Endothelial cell of umbilical vein (primary cell): ENCODE measurements at regions of chr10 and their contacts with region 1.

Region 1: GRCh38 chr10:127081851-127082345 is 114.5 kb downstream of the INSYN2A start:
- DNase-seq: peak; percentile 65
- H3K4me3 ChIP-seq: no peak overlapping the region
- H3K27ac ChIP-seq: peak overlapping the region; percentile 16
- H3K4me1 ChIP-seq: peaks cover 13% of the 10 kb centered on the region
- H3K27me3 ChIP-seq: no peaks in the 10 kb centered on the region
- CTCF ChIP-seq: no peak
- POLR2A ChIP-seq: no peak

Region 2: GRCh38 chr10:127069436-127069835 is 12.5 kb before region 1 on chr10:
- CTCF ChIA-PET with region 1: no interaction called
- POLR2A ChIA-PET with region 1: interaction called, 12 read pairs
- dilution Hi-C with region 1: no loop called
- intact Hi-C with region 1: no loop called
- DNase-seq: no peak
- H3K4me3 ChIP-seq: no peak overlapping the region
- H3K27ac ChIP-seq: no peak overlapping the region
- H3K4me1 ChIP-seq: no peaks in the 10 kb centered on the region
- H3K27me3 ChIP-seq: no peaks in the 10 kb centered on the region
- CTCF ChIP-seq: no peak
- POLR2A ChIP-seq: no peak